Aorta (tissue), 5 donors: ENCODE measurements at regions of chr14 and their contacts with region 1.

Region 1: DNA sequence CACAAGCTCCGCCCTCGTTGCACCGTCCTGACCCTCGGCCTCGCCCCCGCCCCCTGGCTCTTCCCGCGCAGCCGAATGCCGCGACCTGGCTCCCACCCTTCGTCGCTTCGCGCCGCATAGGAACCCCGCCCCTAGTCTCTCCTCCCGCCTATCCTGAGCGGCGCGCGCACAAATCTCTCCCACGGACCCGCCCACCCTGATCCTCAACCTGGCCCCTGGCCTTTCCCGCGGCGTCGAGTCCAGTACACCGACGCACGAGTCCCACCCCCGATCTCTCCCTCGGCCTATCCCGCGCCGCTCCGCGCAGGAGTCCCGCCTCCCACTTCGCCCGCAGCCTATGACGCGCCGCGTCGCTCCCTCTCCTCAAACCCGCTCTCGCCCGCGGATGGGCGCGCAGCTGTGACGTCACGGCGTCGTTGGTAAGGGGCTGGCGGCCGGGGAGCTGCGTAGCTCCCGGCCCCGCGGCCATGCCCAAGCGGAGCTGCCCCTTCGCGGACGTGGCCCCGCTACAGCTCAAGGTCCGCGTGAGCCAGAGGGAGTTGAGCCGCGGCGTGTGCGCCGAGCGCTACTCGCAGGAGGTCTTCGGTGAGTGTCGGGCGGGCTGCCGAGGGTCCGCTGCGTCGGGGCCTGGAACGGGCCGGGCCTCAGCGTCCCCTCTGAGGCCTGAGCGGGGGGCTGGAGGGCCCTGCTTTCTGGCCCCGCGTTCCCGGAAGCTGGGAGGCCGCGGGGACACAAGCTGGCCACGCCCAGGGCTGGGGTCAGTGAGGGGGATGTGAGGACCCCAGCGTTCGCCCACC is at the start of gene SIVA1:
- DNase-seq: peak; percentile 100
- ATAC-seq: peak; percentile 98
- H3K4me3 ChIP-seq: peak within 1 kb of the TSS; percentile 55 to 81
- H3K27ac ChIP-seq: peak within 1 kb of the TSS; percentile 24 to 65
- H3K4me1 ChIP-seq: peaks cover 0 to 3% of the 10 kb centered on the region in 2 donors
- H3K27me3 ChIP-seq: no peaks in the 10 kb centered on the region
- total RNA-seq, gene SIVA1: 74.3 to 83.0 TPM

Region 2: DNA sequence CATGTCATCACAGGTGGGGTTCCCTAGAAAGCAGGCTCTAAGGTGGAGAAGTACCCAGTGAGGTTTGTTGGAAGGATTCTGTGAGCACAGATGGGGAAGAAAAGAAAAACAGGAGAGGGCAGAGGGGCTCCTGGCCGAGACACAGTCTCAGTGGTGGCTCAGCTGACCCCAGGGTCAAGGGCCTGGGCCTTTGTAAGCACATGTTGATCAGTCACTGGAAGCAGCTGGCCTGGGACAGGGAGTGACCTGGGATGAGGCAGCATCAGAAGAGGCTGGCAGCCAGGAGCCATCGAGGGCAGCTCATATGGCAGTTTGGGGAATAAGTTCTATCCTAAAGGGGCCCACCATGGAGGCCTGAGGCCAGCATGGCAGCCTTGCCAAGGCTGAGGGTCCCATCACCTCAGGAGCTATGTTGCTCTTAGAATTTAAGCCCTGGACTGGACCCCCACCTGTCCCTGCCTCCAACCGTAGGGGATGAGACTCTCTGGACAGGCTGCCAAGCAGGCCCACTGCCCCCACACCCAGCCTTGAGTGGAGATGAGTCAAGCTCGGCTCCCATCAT is 142.1 kb before region 1 on chr14:
- intact Hi-C with region 1: no loop called
- DNase-seq: no peak
- ATAC-seq: no peak
- H3K4me3 ChIP-seq: no peak overlapping the region
- H3K27ac ChIP-seq: no peak overlapping the region
- H3K4me1 ChIP-seq: no peaks in the 10 kb centered on the region
- H3K27me3 ChIP-seq: no peaks in the 10 kb centered on the region

Region 3: DNA sequence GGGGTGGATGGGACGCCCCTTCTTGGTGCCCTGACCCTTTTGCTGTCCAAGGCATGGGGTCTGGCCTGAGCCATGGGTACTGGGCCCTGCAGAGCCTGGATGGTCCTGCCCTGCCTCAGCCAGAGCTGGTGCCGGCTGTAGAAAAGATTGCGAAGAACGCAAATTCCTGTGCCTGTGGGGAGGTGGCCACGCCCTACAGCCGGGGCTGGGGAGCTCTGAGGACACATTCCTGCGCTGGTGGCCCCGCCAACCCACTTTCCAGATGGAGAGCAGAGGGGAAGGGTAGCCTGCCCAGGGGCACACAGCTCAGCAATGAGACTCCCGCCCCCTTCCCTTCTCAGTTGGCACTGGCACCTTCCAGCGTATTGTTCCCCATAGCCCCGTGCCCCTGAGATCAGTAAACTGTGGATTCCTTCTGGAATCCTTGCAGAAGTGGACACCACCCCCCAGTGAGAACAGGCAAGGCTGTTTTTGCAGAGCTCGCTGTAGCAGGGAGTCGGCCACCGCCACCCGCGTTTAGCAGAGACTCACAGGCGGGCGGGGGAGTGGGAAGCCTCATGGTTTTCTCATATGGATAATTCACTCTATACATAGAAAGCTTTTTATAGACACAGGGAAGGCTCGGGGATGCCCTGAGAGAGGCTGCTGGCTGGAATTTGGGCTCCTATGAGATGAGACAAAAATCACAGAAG is 54.9 kb before region 1 on chr14:
- intact Hi-C with region 1: no loop called
- DNase-seq: no peak
- ATAC-seq: no peak
- H3K4me3 ChIP-seq: no peak overlapping the region
- H3K27ac ChIP-seq: no peak overlapping the region
- H3K4me1 ChIP-seq: no peaks in the 10 kb centered on the region
- H3K27me3 ChIP-seq: no peaks in the 10 kb centered on the region

Region 4: DNA sequence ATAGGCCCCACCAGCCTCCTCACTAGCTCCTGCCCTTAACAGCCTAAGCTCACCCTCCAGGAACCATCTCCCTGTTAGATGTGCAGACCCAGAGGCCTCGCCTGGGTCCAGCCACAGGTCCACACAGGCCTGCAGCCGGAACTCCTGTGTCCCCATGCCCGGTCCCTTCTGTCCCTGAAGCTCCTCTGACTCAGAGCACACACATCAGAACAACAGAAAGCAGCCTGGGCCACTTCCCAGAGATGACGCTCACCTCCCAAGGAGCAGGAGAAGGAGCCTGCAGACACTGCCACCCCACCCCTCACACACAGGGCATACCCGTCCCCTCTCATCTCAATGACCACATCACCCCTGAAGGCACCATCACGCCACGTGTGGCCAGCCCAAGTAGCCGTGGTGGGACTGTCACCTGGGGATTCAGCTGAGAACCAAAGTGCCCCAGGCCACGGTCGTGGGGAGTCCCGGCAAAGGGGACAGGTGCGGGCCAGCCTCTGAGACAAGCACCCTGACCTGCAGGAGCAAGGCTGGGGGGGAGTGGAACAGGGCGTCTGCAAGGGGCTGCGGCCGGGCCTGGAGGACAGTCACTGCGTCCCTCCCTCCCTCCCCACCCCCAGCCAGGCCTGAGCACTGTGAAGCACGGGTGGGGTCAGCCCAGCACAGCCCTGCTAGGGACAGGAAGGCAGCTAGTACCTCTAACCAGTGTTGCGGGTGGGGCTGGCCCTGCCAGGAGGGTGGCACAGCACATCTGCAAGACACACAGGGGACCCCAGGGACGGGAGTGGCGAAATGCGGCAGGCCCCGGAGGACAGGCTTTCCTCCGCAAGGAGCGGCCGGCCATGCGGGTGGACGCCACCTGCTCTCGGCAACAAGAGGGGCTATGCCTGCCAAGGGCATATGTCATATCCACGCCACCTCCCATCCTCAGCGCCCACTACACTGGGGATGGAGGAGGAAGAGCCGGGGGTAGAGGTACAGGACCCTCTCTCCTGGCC is 37.1 kb after region 1 on chr14:
- intact Hi-C with region 1: loop called in 1 of 2 experiments (anchors 1 kb)
- DNase-seq: no peak
- ATAC-seq: no peak
- H3K4me3 ChIP-seq: no peak overlapping the region
- H3K27ac ChIP-seq: no peak overlapping the region
- H3K4me1 ChIP-seq: peaks cover 0 to 7% of the 10 kb centered on the region in 2 donors
- H3K27me3 ChIP-seq: no peaks in the 10 kb centered on the region

Region 5: DNA sequence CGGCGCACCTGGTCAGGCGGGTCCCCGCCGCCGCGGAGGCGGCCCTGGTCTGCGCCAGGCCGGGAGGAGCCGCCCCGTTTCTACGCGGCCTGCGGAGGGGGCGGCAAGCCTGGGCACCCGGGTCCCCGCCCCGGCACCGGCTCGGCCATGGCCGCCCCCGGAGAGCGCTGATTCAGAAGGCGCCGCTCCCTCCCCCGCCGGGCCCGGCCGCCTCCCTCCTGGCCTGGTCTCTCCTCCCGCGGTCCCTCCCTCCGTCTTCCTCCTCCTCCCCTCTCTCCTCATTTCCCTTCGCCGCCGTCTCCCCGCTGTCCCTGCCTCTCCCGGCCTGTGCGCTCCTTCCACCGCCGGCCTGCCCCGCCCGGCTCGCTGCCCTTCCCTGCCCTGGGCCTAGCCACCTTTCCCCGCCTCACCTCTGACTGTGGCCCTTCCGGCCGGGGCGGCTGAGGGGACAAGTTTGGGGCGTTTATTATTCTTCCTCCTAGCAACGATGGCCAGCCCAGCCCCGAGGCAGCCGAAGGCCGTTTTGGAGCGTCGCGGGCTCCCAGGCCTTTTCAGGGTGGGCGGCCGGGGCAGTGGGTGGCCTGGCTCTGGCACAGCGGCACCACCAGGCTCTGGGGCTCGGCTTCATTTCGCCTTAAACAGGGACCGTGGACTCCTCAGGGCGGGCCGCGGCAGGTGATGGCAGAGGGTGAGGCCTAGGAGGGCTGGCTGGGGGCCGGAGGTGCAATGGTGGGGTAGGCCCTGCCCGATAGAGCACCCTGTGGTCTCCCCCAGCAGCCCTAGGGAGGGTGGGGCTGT is 112.9 kb after region 1 on chr14:
- intact Hi-C with region 1: no loop called
- DNase-seq: peak; percentile 83 to 94
- ATAC-seq: peak; percentile 85
- H3K4me3 ChIP-seq: peak overlapping the region; percentile 79 to 80
- H3K27ac ChIP-seq: no peak overlapping the region
- H3K4me1 ChIP-seq: peaks cover 0 to 4% of the 10 kb centered on the region in 2 donors
- H3K27me3 ChIP-seq: no peaks in the 10 kb centered on the region